T-cell (primary cell): ENCODE measurements at regions of chr10 and their contacts with region 1.

Region 1: DNA sequence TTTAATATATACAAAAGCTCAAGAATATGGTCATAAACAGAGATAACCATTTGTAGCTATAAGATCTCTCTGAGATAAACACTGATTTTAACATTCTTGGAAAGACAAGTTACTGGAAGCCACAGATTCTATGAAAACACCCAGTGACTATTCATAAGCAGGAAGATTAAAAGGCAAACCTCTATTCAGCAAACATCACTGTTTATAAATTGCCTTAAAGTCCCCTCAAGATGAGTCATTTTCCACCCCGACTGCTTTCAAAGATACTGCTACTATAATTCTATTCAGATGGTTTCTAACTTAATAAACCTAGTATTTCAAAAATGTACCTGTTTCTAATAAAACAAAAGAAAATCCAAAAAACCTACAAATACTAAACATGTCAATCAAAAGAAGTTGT is 21.0 kb downstream of the TM9SF3 start:
- DNase-seq: no peak
- ATAC-seq: peak in 2 of 4 experiments; percentile 29 to 43
- H3K4me3 ChIP-seq: no peak overlapping the region
- H3K4me3 Mint-ChIP-seq: no peak overlapping the region
- H3K27ac ChIP-seq: no peak overlapping the region
- H3K27ac Mint-ChIP-seq: no peak overlapping the region
- H3K4me1 ChIP-seq: peaks cover 0 to 5% of the 10 kb centered on the region in 2 experiments
- H3K4me1 Mint-ChIP-seq: peaks cover 45 to 57% (median 51%) of the 10 kb centered on the region in 3 donors
- H3K27me3 ChIP-seq: no peaks in the 10 kb centered on the region
- H3K27me3 Mint-ChIP-seq: no peaks in the 10 kb centered on the region

Region 2: DNA sequence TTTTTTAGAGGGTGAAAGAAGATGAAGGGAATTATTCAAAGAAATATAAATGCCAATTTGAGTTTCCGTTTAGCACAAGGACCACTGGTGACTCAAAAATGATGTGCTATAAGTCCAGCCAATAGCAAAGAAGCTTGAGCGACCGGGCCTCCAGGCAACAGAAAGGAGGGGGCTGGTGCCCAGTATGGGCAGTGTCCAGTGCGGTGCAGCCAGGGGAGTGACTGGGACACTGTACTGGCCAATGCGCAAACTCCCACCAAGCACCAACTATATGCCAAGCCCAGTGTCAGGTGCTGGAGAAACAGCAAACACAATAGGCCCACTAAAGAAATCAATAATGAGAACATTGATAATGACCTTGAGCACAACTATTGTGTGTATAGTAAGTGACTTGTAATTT is 196.8 kb before region 1 on chr10:
- CTCF ChIA-PET with region 1: no interaction called
- POLR2A ChIA-PET with region 1: interaction called in 1 of 2 experiments, 14 read pairs
- DNase-seq: no peak
- ATAC-seq: no peak
- H3K4me3 ChIP-seq: no peak overlapping the region
- H3K4me3 Mint-ChIP-seq: no peak overlapping the region
- H3K27ac ChIP-seq: no peak overlapping the region
- H3K27ac Mint-ChIP-seq: no peak overlapping the region
- H3K4me1 ChIP-seq: peaks cover 0 to 2% of the 10 kb centered on the region in 2 experiments
- H3K4me1 Mint-ChIP-seq: no peaks in the 10 kb centered on the region
- H3K27me3 ChIP-seq: peaks cover 0 to 21% of the 10 kb centered on the region in 2 experiments
- H3K27me3 Mint-ChIP-seq: peaks cover 0 to 7% of the 10 kb centered on the region in 2 donors

Region 3: DNA sequence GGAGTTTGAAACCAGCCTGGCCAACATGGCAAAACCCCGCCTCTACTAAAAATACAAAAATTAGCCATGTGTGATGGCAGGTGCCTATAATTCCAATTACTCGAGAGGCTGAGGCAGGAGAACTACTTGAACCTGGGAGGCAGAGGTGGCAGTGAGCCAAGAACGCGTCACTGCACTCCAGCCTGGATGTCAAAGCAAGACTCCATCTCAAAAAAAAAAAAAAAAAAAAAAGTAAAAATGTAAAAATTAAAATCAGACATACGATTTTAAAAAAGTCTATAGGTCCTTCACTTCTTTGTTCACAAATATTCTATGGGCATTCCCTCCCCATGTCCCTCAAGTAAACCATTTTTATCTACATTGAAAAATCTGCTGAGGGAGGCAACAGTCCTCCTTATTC is 17.2 kb before region 1 on chr10:
- CTCF ChIA-PET with region 1: interaction called in 1 of 2 experiments, 13 read pairs
- POLR2A ChIA-PET with region 1: interaction called in 1 of 2 experiments, 9 read pairs
- DNase-seq: no peak
- ATAC-seq: no peak
- H3K4me3 ChIP-seq: no peak overlapping the region
- H3K4me3 Mint-ChIP-seq: no peak overlapping the region
- H3K27ac ChIP-seq: no peak overlapping the region
- H3K27ac Mint-ChIP-seq: no peak overlapping the region
- H3K4me1 ChIP-seq: no peaks in the 10 kb centered on the region
- H3K4me1 Mint-ChIP-seq: peaks cover 2 to 13% (median 9%) of the 10 kb centered on the region in 3 donors
- H3K27me3 ChIP-seq: no peaks in the 10 kb centered on the region
- H3K27me3 Mint-ChIP-seq: no peaks in the 10 kb centered on the region

Region 4: DNA sequence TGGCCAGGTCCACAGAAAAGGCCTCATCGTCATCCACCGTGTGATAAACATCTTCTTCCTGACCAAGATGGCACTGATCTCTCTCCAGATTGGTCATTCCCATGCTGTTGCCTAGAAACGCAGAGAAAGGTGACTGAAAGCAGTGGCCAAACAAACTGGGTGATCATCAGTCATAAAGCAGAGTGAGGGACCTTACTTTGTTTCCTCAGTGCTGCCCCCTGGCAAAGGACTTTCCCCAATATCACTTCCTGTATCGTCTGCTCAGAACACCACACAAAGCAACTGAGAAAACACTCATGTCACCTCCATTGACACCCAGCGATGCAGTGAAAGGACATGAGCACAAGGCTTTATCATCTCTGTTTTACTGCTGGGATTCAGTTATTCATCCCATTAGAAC is 61.0 kb after region 1 on chr10:
- CTCF ChIA-PET with region 1: no interaction called
- POLR2A ChIA-PET with region 1: interaction called in 1 of 2 experiments, 11 read pairs
- DNase-seq: peak in 8 of 35 experiments; percentile 2 to 25 (median 6)
- ATAC-seq: no peak
- H3K4me3 ChIP-seq: no peak overlapping the region
- H3K4me3 Mint-ChIP-seq: no peak overlapping the region
- H3K27ac ChIP-seq: no peak overlapping the region
- H3K27ac Mint-ChIP-seq: no peak overlapping the region
- H3K4me1 ChIP-seq: no peaks in the 10 kb centered on the region
- H3K4me1 Mint-ChIP-seq: no peaks in the 10 kb centered on the region
- H3K27me3 ChIP-seq: no peaks in the 10 kb centered on the region
- H3K27me3 Mint-ChIP-seq: no peaks in the 10 kb centered on the region